CD8-positive, alpha-beta T cell (primary cell): ENCODE measurements at regions of chr5 and their contacts with region 1.

Region 1: GRCh38 chr5:36875790-36876388 is 680 bp upstream of the NIPBL start:
- DNase-seq: peak; percentile 58 to 90 (median 76)
- ATAC-seq: peak; percentile 50
- H3K4me3 ChIP-seq: peak overlapping the region; percentile 91 to 94
- H3K4me3 Mint-ChIP-seq: peak overlapping the region; percentile 94
- H3K27ac ChIP-seq: peak overlapping the region; percentile 90 to 92
- H3K27ac Mint-ChIP-seq: peak overlapping the region; percentile 96
- H3K4me1 ChIP-seq: peaks cover 42% of the 10 kb centered on the region
- H3K4me1 Mint-ChIP-seq: peaks cover 59% of the 10 kb centered on the region
- H3K27me3 ChIP-seq: no peaks in the 10 kb centered on the region
- H3K27me3 Mint-ChIP-seq: no peaks in the 10 kb centered on the region
- CTCF ChIP-seq: peak; percentile 37

Region 2: GRCh38 chr5:34929150-34929719 is 1946.7 kb before region 1 on chr5 and contains the start of gene DNAJC21:
- CTCF ChIA-PET with region 1: no interaction called
- POLR2A ChIA-PET with region 1: no interaction called
- intact Hi-C with region 1: loop called (anchors 5 kb)
- DNase-seq: peak; percentile 94 to 99 (median 96)
- ATAC-seq: peak; percentile 90
- H3K4me3 ChIP-seq: peak within 1 kb of the TSS; percentile 72 to 87
- H3K4me3 Mint-ChIP-seq: peak within 1 kb of the TSS; percentile 97
- H3K27ac ChIP-seq: peak within 1 kb of the TSS; percentile 72 to 83
- H3K27ac Mint-ChIP-seq: peak within 1 kb of the TSS; percentile 94
- H3K4me1 ChIP-seq: peaks cover 27% of the 10 kb centered on the region
- H3K4me1 Mint-ChIP-seq: peaks cover 37% of the 10 kb centered on the region
- H3K27me3 ChIP-seq: no peaks in the 10 kb centered on the region
- H3K27me3 Mint-ChIP-seq: no peaks in the 10 kb centered on the region
- CTCF ChIP-seq: no peak
- total RNA-seq, gene DNAJC21: 55.7 to 56.6 TPM

Region 3: DNA sequence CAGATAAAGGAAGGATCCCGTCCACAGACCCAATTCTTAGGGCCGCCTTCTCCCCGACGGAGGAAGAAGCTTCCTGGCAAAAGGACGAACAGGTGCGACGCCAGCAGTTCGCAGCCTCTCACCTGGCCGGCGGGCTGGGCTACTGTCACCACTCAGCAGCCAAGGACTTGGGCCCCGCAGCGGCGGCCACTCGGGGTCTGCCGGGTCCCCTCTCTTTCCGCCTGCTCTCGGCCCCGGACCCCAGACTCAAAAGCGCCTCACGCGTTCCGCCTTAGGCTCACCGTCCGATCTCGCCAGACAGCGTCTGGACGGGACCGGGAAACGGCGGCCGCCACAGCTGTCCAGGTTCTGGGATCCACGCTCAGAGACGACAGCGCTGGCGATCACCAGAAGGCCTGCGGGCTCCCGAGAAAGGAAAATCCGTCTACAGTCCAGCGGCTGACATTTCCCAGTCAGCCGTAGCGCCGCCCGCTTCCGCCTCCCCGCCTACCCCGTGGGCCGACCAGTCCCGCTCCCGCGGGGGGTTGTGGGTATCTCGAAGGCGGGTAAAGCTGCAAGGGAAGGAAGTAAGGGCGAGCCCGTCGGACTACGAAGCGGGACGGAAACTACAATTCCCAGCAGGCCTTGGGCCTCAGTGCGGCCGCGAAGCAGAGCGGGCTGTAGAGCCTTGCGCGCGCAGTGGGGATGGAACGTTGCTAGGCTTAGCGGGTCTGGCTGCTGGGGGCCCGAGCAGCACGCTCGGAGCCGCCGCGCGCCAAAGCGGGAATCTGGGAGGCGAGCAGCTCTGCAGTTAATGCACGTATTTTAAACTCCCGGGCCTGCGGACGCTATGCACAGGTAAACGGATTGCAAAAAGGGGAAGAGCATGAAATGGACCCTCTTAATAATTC is 724.2 kb before region 1 on chr5 and contains the starts of genes LMBRD2 and SKP2:
- CTCF ChIA-PET with region 1: no interaction called
- POLR2A ChIA-PET with region 1: no interaction called
- intact Hi-C with region 1: loop called (anchors 2 to 5 kb)
- DNase-seq: peak; percentile 94 to 99 (median 96)
- ATAC-seq: peak; percentile 95
- H3K4me3 ChIP-seq: peak within 1 kb of the TSS; percentile 82 to 94
- H3K4me3 Mint-ChIP-seq: peak within 1 kb of the TSS; percentile 92
- H3K27ac ChIP-seq: peak within 1 kb of the TSS; percentile 79 to 84
- H3K27ac Mint-ChIP-seq: peak within 1 kb of the TSS; percentile 91
- H3K4me1 ChIP-seq: peaks cover 34% of the 10 kb centered on the region
- H3K4me1 Mint-ChIP-seq: peaks cover 70% of the 10 kb centered on the region
- H3K27me3 ChIP-seq: no peaks in the 10 kb centered on the region
- H3K27me3 Mint-ChIP-seq: no peaks in the 10 kb centered on the region
- CTCF ChIP-seq: no peak
- total RNA-seq, gene LMBRD2: 2.2 to 2.4 TPM
- total RNA-seq, gene SKP2: 5.5 to 6.1 TPM

Region 4: DNA sequence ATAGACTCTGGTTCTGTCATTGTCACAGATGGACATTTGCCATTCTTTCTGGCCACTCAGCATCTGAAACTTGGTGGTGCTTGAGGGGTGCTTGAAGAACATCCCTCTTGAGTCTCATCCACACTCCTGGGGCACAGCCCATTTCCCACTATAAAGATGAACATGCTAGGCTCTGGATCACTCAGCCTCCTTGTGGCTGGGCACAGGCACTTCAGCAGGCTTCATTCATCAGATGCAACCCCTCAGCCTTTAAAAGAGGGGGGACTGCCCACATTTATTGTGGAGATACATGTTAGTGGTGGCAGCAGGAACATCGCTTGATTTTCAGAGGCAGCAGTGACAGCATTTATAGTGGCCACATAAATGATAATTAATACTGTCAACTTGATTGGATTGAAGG is 124.0 kb before region 1 on chr5:
- CTCF ChIA-PET with region 1: no interaction called
- POLR2A ChIA-PET with region 1: no interaction called
- intact Hi-C with region 1: no loop called
- DNase-seq: no peak
- ATAC-seq: no peak
- H3K4me3 ChIP-seq: no peak overlapping the region
- H3K4me3 Mint-ChIP-seq: no peak overlapping the region
- H3K27ac ChIP-seq: no peak overlapping the region
- H3K27ac Mint-ChIP-seq: no peak overlapping the region
- H3K4me1 ChIP-seq: no peaks in the 10 kb centered on the region
- H3K4me1 Mint-ChIP-seq: no peaks in the 10 kb centered on the region
- H3K27me3 ChIP-seq: no peaks in the 10 kb centered on the region
- H3K27me3 Mint-ChIP-seq: peaks cover 9% of the 10 kb centered on the region
- CTCF ChIP-seq: no peak

Region 5: GRCh38 chr5:36944607-36945225 is 68.8 kb after region 1 on chr5:
- CTCF ChIA-PET with region 1: interaction called, 4 read pairs
- POLR2A ChIA-PET with region 1: interaction called, 13 read pairs
- intact Hi-C with region 1: loop called (anchors 2 to 5 kb)
- DNase-seq: peak in 2 of 9 experiments; percentile 65 to 75
- ATAC-seq: no peak
- H3K4me3 ChIP-seq: no peak overlapping the region
- H3K4me3 Mint-ChIP-seq: no peak overlapping the region
- H3K27ac ChIP-seq: no peak overlapping the region
- H3K27ac Mint-ChIP-seq: no peak overlapping the region
- H3K4me1 ChIP-seq: peaks cover 6% of the 10 kb centered on the region
- H3K4me1 Mint-ChIP-seq: peaks cover 65% of the 10 kb centered on the region
- H3K27me3 ChIP-seq: no peaks in the 10 kb centered on the region
- H3K27me3 Mint-ChIP-seq: no peaks in the 10 kb centered on the region
- CTCF ChIP-seq: peak; percentile 68